PC-3 (cell line): ENCODE measurements at regions of chr7 and their contacts with region 1.

Region 1: GRCh38 chr7:139359366-139360209 is at the start of gene LUC7L2:
- DNase-seq: peak; percentile 98
- ATAC-seq: peak; percentile 77
- H3K4me3 ChIP-seq: peak within 1 kb of the TSS; percentile 91
- H3K27ac ChIP-seq: peak within 1 kb of the TSS; percentile 88
- H3K4me1 ChIP-seq: peaks cover 14% of the 10 kb centered on the region; the same call in 1 of the 2 replicates
- H3K27me3 ChIP-seq: no peaks in the 10 kb centered on the region
- CTCF ChIP-seq: no peak
- total RNA-seq, gene LUC7L2: 67.4 and 110 TPM in 2 replicates

Region 2: DNA sequence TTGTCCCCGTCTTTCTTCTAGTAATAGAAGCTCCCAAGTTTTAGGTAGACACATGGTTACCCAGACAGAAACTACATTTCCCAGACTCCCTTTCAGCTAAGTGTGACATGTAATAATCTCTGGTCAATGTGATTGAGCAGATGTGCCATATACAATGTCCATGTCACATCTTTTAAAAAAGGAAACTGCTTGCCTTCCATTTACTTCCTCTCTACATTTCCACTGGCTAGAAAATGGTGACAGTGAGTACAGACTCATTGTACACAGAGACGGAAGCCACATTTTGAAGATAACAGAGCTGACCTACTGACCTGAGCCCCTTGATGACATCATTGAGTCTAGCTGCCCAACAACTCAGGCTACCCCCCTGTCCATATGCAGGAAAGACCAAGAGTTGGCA is 271.3 kb before region 1 on chr7:
- CTCF ChIA-PET with region 1: no interaction called
- POLR2A ChIA-PET with region 1: no interaction called
- intact Hi-C with region 1: no loop called
- DNase-seq: no peak
- ATAC-seq: no peak
- H3K4me3 ChIP-seq: no peak overlapping the region
- H3K27ac ChIP-seq: no peak overlapping the region
- H3K4me1 ChIP-seq: no peaks in the 10 kb centered on the region
- H3K27me3 ChIP-seq: no peaks in the 10 kb centered on the region
- CTCF ChIP-seq: no peak

Region 3: GRCh38 chr7:139109188-139109982 is 250.2 kb before region 1 on chr7 and contains the start of gene ZC3HAV1:
- CTCF ChIA-PET with region 1: no interaction called
- POLR2A ChIA-PET with region 1: no interaction called
- intact Hi-C with region 1: loop called (anchors 5 kb)
- DNase-seq: peak; percentile 71
- ATAC-seq: peak; percentile 81
- H3K4me3 ChIP-seq: peak within 1 kb of the TSS; percentile 96
- H3K27ac ChIP-seq: peak within 1 kb of the TSS; percentile 66
- H3K4me1 ChIP-seq: peaks cover 31% of the 10 kb centered on the region
- H3K27me3 ChIP-seq: no peaks in the 10 kb centered on the region
- CTCF ChIP-seq: no peak
- total RNA-seq, gene ZC3HAV1: 19.6 and 25.0 TPM in 2 replicates

Region 4: DNA sequence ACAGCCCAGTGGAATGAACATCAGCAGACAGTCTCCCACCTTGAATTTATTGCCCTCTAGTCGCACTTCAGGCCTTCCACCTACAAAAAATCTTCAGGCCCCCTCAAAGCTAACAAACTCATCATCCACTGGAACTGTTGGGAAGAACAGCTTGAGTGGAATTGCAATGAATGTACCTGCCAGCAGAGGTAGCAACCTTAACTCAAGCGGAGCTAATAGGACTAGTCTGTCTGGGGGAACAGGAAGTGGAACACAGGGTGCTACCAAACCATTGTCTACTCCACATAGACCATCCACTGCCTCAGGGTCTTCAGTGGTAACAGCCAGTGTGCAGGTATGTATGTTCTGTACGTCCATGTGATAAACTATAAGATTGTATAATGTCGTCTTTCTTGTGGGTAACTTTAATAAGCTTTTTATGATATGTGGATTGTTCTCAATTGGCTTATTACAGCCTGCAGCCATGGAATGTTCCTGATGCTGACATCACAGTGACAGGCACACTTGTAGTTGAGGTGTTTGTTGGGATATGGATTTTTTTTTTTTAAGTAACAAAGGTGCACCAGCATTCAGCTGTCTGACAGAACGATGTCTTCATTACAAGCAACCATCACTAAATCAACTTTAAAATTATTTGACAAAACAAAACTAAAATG is 75.2 kb before region 1 on chr7:
- CTCF ChIA-PET with region 1: no interaction called
- POLR2A ChIA-PET with region 1: no interaction called
- intact Hi-C with region 1: no loop called
- DNase-seq: peak; percentile 4
- ATAC-seq: no peak
- H3K4me3 ChIP-seq: no peak overlapping the region
- H3K27ac ChIP-seq: no peak overlapping the region
- H3K4me1 ChIP-seq: no peaks in the 10 kb centered on the region
- H3K27me3 ChIP-seq: no peaks in the 10 kb centered on the region
- CTCF ChIP-seq: no peak

Region 5: GRCh38 chr7:139340037-139340807 is 19.4 kb before region 1 on chr7:
- CTCF ChIA-PET with region 1: no interaction called
- POLR2A ChIA-PET with region 1: interaction called, 9 read pairs
- intact Hi-C with region 1: loop called (anchors 1 kb)
- DNase-seq: peak; percentile 99
- ATAC-seq: peak; percentile 75
- H3K4me3 ChIP-seq: peak overlapping the region; percentile 83
- H3K27ac ChIP-seq: peak overlapping the region; percentile 91
- H3K4me1 ChIP-seq: peaks cover 9% of the 10 kb centered on the region
- H3K27me3 ChIP-seq: no peaks in the 10 kb centered on the region
- CTCF ChIP-seq: peak; percentile 70